A549 (cell line): ENCODE measurements at regions of chr15 and their contacts with region 1.

Region 1: GRCh38 chr15:67839929-67840748 is at the start of gene RNU6-1:
- DNase-seq: peak; percentile 95 to 98
- ATAC-seq: peak; percentile 62 to 84
- H3K4me3 ChIP-seq: peak within 1 kb of the TSS; percentile 69
- H3K27ac ChIP-seq: peak within 1 kb of the TSS; percentile 87 to 92
- H3K4me1 ChIP-seq: peaks cover 13% of the 10 kb centered on the region
- CTCF ChIP-seq: no peak; the same call in 2 of the 3 replicates
- EP300 ChIP-seq: no peak
- POLR2A ChIP-seq: peak; percentile 83
- RAD21 ChIP-seq: peak in 1 of 2 experiments; percentile 1; a peak in 1 of 5 replicates
- polyA plus RNA-seq, gene RNU6-1: not detected in 2 replicates

Region 2: GRCh38 chr15:67465196-67465952 is 374.8 kb before region 1 on chr15:
- CTCF ChIA-PET with region 1: interaction called, 67 read pairs
- POLR2A ChIA-PET with region 1: no interaction called
- DNase-seq: no peak
- ATAC-seq: no peak
- H3K4me3 ChIP-seq: no peak overlapping the region
- H3K27ac ChIP-seq: no peak overlapping the region
- H3K4me1 ChIP-seq: no peaks in the 10 kb centered on the region
- CTCF ChIP-seq: no peak
- EP300 ChIP-seq: no peak
- POLR2A ChIP-seq: no peak
- RAD21 ChIP-seq: no peak

Region 3: GRCh38 chr15:67501177-67501835 is 338.8 kb before region 1 on chr15:
- CTCF ChIA-PET with region 1: interaction called, 30 read pairs
- POLR2A ChIA-PET with region 1: no interaction called
- DNase-seq: peak in 1 of 2 experiments; percentile 33
- ATAC-seq: peak; percentile 62 to 77; a peak in 4 of 6 replicates
- H3K4me3 ChIP-seq: no peak overlapping the region
- H3K27ac ChIP-seq: no peak overlapping the region
- H3K4me1 ChIP-seq: no peaks in the 10 kb centered on the region
- CTCF ChIP-seq: peak; percentile 56
- EP300 ChIP-seq: no peak
- POLR2A ChIP-seq: no peak
- RAD21 ChIP-seq: peak; percentile 50 to 65; a peak in 4 of 5 replicates

Region 4: DNA sequence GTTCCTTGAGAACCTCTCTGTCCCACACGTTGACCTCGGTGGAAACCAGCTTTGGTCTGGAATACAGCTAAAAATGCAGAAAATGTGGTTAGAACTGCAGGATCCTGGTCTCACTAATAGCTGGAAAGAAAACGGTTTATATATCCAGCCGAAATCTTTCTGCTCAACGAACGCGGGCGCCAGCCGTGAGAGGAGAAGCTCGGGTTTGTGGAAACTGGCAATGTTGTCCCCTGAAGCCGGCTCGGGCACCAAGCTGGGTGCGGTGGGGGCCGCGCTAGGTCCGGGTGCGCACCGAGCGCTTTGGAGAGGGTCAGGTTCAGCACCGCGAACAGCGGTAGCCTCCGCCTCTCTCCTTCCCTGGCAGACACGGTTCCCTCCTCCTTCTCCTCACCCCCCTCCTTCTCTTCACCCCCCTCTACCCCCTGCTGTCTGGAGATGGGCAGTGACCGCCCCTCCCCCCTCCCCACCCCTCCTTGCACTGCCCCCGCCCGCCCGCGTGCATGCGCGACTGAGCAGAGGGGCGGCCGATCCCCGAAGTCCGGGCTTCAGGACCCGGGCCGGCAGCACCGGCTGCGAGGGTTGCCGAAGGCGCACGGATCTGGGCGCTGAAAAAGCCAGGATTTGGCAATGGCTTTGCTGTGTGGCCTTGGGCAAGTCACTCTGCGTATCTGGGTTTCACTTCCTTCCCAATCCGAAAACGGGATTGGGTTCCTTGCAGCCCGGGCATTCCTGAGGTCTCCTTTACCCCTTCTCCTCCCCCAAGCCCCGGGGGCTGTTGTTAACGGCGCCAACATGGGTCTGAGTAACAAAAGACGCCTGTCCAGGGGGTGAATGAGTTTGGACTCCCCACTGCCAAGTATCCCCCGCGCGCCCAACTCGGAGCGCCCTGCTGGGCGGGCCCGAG is 14.9 kb before region 1 on chr15 and contains the start of gene SKOR1:
- CTCF ChIA-PET with region 1: interaction called, 26 read pairs
- POLR2A ChIA-PET with region 1: no interaction called
- DNase-seq: peak in 1 of 2 experiments; percentile 46
- ATAC-seq: peak; percentile 63 to 66; a peak in 5 of 6 replicates
- H3K4me3 ChIP-seq: peak within 1 kb of the TSS; percentile 39
- H3K27ac ChIP-seq: no peak within 1 kb of the TSS
- H3K4me1 ChIP-seq: peaks cover 22% of the 10 kb centered on the region; the same call in 2 of the 3 replicates
- CTCF ChIP-seq: no peak
- EP300 ChIP-seq: no peak
- POLR2A ChIP-seq: no peak
- RAD21 ChIP-seq: no peak
- polyA plus RNA-seq, gene SKOR1: 0.03 TPM in 2 replicates

Region 5: DNA sequence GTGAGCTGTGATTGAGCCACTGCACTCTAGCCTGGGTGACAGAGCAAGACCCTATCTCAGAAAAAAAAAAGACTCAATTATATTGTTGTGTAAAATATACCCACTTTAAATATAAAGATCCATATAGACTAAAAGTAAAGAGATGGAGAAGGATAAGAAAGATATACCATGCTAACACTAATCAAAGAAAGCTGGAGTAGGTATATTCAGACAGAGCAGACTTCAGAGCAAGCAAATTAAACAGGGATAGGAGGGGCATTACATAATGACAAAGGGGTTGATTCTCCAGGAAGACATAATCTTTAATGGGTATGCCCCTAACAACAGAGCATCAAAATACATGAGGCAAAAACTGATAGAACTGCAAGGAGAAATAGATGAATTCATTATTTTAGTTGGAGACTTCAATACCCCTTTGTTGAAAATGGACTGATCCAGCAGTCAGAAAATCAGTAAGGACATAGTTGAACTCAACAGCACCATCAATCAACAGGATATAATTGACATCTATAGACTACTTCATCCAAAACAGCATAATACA is 30.8 kb after region 1 on chr15:
- CTCF ChIA-PET with region 1: no interaction called
- POLR2A ChIA-PET with region 1: no interaction called
- DNase-seq: no peak
- ATAC-seq: no peak
- H3K4me3 ChIP-seq: no peak overlapping the region
- H3K27ac ChIP-seq: no peak overlapping the region
- H3K4me1 ChIP-seq: no peaks in the 10 kb centered on the region
- CTCF ChIP-seq: no peak
- EP300 ChIP-seq: no peak
- POLR2A ChIP-seq: no peak
- RAD21 ChIP-seq: no peak